Ascending aorta (tissue), 2 donors: ENCODE measurements at regions of chr10 and their contacts with region 1.

Region 1: DNA sequence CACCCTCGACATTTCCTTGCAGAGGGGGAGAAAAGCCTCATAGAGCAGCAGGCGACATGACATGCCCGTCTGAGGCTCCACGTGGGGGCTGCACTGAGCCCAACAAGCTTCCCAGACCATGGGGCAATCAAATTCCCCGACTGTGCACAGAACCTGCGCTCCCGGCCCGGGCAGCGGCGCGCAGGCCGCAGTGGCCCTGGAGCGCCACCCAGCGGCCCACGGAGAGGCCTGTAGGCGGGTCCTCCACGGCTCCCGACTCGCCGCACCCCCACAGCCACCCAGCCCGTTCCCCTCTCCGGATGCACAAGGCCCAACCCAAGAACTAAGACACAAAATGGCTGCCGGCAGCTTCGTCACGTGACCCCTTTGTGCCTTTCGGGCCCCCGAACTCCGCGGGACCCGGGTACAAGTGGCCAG is 816 bp downstream of the EPC1 start:
- DNase-seq: peak; percentile 84 to 98
- H3K4me3 ChIP-seq: peak overlapping the region; percentile 96 to 97
- H3K27ac ChIP-seq: peak overlapping the region; percentile 100
- H3K4me1 ChIP-seq: peaks cover 0 to 56% of the 10 kb centered on the region in 2 donors
- H3K27me3 ChIP-seq: no peaks in the 10 kb centered on the region
- CTCF ChIP-seq: peak; percentile 95 to 98 (median 97)

Region 2: DNA sequence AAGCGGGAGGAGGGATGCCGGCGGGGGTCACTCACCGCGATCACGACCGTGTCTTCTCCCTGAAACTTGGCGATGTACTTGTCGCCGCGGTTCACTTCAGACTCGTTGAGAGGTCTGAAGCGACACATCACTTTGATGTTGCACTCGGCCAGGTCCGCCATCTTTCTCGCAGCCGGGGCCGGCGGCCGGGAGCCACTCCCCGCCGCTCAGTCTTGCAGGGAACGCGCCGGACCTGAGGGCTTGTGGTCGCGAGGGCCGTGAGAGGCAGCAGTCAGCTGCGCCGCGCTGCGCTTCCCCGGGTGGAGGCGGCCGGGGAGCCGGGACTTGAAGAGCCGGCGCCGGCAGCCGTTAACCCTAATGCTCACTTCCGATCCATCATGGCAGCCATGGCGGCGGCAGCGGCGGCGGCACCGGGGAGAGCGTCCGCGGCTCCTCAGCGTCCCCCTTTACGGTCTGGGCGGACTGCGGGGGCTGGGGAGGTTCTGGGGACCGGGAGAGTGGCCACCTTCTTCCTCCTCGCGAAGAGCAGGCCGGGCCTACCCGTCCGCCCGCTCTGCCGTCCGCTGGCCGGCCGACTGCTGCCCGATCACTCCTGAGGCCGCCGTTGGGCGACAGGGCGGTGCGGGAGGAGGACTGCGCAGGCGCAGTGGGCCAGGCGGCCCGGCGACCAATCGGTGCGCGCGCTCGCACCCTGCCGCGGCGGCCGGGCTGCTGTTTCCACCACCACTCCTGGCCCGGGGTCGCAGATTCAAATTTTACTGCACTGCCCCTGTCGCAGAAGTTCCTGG is 290.1 kb before region 1 on chr10 and contains the start of gene KIF5B:
- intact Hi-C with region 1: loop called (anchors 5 kb)
- DNase-seq: peak; percentile 27 to 90
- H3K4me3 ChIP-seq: peak within 1 kb of the TSS; percentile 79 to 98
- H3K27ac ChIP-seq: peak within 1 kb of the TSS; percentile 98 to 100
- H3K4me1 ChIP-seq: peaks cover 0 to 16% of the 10 kb centered on the region in 2 donors
- H3K27me3 ChIP-seq: no peaks in the 10 kb centered on the region
- CTCF ChIP-seq: no peak
- total RNA-seq, gene KIF5B: 78.1 TPM

Region 3: GRCh38 chr10:32190890-32191491 is 155.2 kb before region 1 on chr10:
- intact Hi-C with region 1: loop called (anchors 2 kb)
- DNase-seq: no peak
- H3K4me3 ChIP-seq: no peak overlapping the region
- H3K27ac ChIP-seq: no peak overlapping the region
- H3K4me1 ChIP-seq: no peaks in the 10 kb centered on the region
- H3K27me3 ChIP-seq: no peaks in the 10 kb centered on the region
- CTCF ChIP-seq: peak; percentile 62 to 74 (median 69)

Region 4: GRCh38 chr10:32256613-32257437 is 89.3 kb before region 1 on chr10:
- intact Hi-C with region 1: loop called (anchors 1 kb)
- DNase-seq: peak in 1 of 2 donors; percentile 82
- H3K4me3 ChIP-seq: no peak overlapping the region
- H3K27ac ChIP-seq: no peak overlapping the region
- H3K4me1 ChIP-seq: no peaks in the 10 kb centered on the region
- H3K27me3 ChIP-seq: no peaks in the 10 kb centered on the region
- CTCF ChIP-seq: peak; percentile 69 to 81 (median 78)

Region 5: GRCh38 chr10:32367793-32368453 is 21.8 kb after region 1 on chr10:
- intact Hi-C with region 1: loop called (anchors 2 kb)
- DNase-seq: no peak
- H3K4me3 ChIP-seq: peak overlapping the region in 1 of 2 donors; percentile 24
- H3K27ac ChIP-seq: no peak overlapping the region
- H3K4me1 ChIP-seq: peaks cover 0 to 8% of the 10 kb centered on the region in 2 donors
- H3K27me3 ChIP-seq: no peaks in the 10 kb centered on the region
- CTCF ChIP-seq: peak; percentile 55 to 86 (median 65)

Region 6: GRCh38 chr10:32378363-32379317 is 32.5 kb after region 1 on chr10:
- intact Hi-C with region 1: loop called (anchors 2 kb)
- DNase-seq: peak; percentile 85 to 96
- H3K4me3 ChIP-seq: peak overlapping the region; percentile 70 to 87
- H3K27ac ChIP-seq: peak overlapping the region; percentile 63 to 82
- H3K4me1 ChIP-seq: peaks cover 0 to 10% of the 10 kb centered on the region in 2 donors
- H3K27me3 ChIP-seq: no peaks in the 10 kb centered on the region
- CTCF ChIP-seq: no peak